H1 (cell line): ENCODE measurements at regions of chr14 and their contacts with region 1.

Region 1: GRCh38 chr14:101843665-101844064 is 82.2 kb downstream of the PPP2R5C start:
- DNase-seq: no peak
- H3K4me3 ChIP-seq: no peak overlapping the region
- H3K27ac ChIP-seq: no peak overlapping the region
- H3K4me1 ChIP-seq: peaks cover 0 to 7% (median 4%) of the 10 kb centered on the region in 4 experiments; a peak in 5 of 7 replicates
- H3K27me3 ChIP-seq: no peaks in the 10 kb centered on the region
- CTCF ChIP-seq: peak in 2 of 3 experiments; percentile 40 to 45; a peak in 2 of 4 replicates
- EP300 ChIP-seq: no peak
- POLR2A ChIP-seq: no peak
- RAD21 ChIP-seq: peak; percentile 50 to 60

Region 2: DNA sequence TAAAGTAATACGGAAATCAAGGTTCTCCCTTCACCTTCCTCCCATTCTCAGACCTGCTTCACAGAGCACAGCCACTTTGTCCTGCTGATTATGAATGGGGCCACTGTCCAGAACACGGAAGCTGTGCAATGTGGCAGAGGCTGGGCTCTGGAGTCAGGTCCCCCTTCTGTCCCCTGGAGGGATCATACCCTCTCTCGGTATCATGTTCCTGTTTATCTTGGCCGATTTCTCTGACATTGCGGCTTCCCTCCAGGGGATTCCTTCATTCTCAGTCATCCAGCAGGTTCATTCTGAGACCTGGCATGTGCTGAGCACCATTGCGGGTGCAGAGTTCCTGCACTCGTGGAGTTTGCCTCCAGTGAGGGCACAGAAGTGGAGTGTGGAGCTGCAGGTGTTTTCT is 70.8 kb before region 1 on chr14:
- CTCF ChIA-PET with region 1: interaction called, 24 read pairs
- POLR2A ChIA-PET with region 1: no interaction called
- DNase-seq: no peak
- H3K4me3 ChIP-seq: no peak overlapping the region
- H3K27ac ChIP-seq: no peak overlapping the region
- H3K4me1 ChIP-seq: peaks cover 0 to 3% (median 0%) of the 10 kb centered on the region in 4 experiments; a peak in 2 of 7 replicates
- H3K27me3 ChIP-seq: 0 out of 7 replicates have a peak, but pooled peaks cover 0 to 3% (median 0%) of the 10 kb centered on the region in 4 experiments
- CTCF ChIP-seq: no peak
- EP300 ChIP-seq: no peak
- POLR2A ChIP-seq: no peak
- RAD21 ChIP-seq: no peak